Activated CD4-positive, alpha-beta memory T cell treated with anti-CD3 and anti-CD28 coated beads for 36 hours (primary cell): ENCODE measurements at regions of chr17 and their contacts with region 1.

Region 1: DNA sequence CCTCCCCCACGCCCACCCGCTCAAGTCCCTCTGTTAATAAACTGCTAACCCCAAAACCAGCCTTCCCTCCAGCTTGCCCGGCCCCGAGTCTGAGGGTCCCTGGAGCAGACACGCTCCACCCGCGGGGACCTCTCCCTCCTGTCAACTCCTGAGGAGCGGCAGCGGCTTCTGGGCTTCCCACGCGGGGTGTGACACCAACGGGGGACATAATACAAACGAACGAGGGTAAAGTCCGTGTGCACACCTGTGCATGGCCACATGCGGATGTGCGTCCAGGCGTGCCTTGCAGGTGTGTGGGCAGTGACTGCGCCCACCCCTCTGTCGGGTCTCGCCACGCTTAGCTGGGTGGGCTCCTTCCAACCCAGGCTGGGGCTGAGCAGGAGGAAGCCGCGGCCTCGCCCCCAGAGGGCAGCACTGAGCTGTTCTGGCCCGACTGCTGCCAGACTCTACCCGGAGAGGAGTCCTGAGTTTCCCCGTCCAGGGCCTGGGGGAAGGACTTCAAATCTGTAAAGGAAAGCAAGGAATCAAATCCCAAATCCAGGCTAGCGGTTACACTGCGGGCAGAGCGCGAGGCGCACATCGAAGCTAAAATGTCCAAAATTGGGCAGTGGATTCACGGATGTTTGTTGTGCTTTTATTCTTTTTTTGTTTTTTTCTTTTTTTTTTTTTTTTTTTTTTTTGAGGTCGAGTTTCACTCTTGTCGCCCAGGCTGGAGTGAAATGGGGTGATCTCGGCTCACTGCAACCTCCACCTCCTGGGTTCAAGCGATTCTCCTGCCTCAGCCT is 24.2 kb upstream of the KRT17 start:
- DNase-seq: peak; percentile 87
- H3K4me3 Mint-ChIP-seq: peak overlapping the region; percentile 42
- H3K27ac Mint-ChIP-seq: no peak overlapping the region
- H3K4me1 Mint-ChIP-seq: peaks cover 11% of the 10 kb centered on the region
- H3K27me3 Mint-ChIP-seq: no peaks in the 10 kb centered on the region

Region 2: DNA sequence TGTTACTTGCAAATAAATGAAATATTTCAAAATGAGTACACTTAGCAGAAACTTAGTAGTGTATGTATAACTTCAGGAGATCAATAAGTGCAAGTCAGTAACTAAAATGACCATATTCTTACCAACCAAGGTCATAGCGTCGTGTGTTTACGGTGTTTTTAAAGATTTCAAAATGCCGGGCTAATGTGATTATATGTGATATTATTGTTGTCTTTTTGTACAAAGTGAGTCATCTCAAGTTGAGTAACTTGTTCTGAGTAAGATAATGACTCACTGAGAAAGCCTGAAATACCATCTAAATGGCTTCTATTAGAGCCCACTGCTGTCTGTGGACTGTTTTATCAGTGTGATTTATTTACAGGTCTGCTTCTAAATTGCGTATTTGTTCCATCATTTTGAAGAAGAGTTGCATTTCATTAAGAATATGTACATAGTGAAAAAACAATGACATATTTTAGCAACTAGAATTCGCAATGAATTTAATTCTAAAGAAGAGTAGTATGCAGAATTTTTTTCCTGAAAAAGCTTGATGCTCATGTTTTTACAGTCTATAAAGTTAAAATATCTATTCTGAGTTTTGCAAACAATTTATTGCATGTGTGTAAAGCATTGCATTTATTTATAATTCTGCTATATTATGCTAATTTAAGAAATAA is 794.3 kb before region 1 on chr17:
- CTCF ChIA-PET with region 1: interaction called, 41 read pairs
- POLR2A ChIA-PET with region 1: no interaction called
- intact Hi-C with region 1: loop called (anchors 5 kb)
- DNase-seq: no peak
- H3K4me3 Mint-ChIP-seq: no peak overlapping the region
- H3K27ac Mint-ChIP-seq: no peak overlapping the region
- H3K4me1 Mint-ChIP-seq: peaks cover 2% of the 10 kb centered on the region
- H3K27me3 Mint-ChIP-seq: peaks cover 6% of the 10 kb centered on the region

Region 3: DNA sequence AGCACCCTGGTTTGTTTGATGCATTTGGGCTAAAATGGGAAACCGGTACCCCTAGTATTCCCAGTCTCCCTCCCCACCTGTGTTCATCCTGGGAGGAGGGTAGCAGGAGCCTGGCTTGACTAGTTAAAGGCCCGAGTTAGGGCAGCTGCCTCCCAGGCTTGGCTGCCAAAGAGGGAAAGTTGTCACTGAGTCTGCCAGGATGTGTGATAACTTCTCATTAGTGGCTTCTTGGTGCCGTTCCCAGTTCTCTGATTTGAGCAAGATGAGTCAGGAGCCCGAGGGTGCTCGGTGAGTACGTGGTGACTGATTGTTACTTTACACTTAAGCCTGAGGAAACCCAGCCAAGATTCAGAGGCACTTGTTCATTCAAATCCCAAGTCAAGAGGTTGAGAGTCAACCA is 183.9 kb before region 1 on chr17:
- CTCF ChIA-PET with region 1: no interaction called
- POLR2A ChIA-PET with region 1: no interaction called
- intact Hi-C with region 1: no loop called
- DNase-seq: no peak
- H3K4me3 Mint-ChIP-seq: no peak overlapping the region
- H3K27ac Mint-ChIP-seq: no peak overlapping the region
- H3K4me1 Mint-ChIP-seq: no peaks in the 10 kb centered on the region
- H3K27me3 Mint-ChIP-seq: no peaks in the 10 kb centered on the region

Region 4: DNA sequence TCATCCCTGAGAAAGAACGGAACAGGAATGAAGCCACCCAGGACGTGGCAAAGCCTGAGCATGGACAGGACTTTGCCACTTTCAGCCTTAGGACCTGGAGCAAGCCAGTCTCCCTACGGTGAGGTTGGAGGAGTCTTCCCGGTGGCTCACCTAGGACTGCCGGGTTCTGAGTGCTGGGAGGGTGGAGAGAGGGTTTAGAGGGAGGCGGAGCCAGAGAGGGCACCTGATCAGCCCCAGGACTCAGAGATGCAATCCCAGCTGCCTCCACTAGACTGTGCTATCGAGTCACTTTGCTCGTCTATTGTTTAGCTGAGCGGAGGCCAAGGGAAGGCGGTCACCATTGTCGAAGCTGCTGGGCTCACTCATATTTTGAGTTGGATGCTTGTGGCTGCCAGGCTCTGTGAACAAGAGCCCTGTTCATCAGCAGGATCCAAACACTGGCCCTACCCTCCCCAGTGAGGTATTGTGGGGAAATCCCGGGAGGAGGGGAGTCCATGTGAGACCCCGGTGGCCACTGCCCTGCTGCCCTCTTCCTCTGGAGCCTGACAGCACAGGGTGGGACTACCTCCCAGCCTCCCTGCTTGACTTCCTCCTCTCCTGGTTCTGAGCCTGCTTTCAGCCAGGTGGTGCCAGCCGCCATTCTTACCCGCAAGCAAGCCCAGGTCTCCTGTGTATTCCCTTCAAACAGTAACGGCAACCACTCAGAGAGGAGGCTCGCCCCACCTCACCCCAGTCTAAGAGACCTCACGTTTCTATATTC is 68.9 kb before region 1 on chr17:
- CTCF ChIA-PET with region 1: interaction called, 13 read pairs
- POLR2A ChIA-PET with region 1: no interaction called
- intact Hi-C with region 1: no loop called
- DNase-seq: peak; percentile 89
- H3K4me3 Mint-ChIP-seq: no peak overlapping the region
- H3K27ac Mint-ChIP-seq: no peak overlapping the region
- H3K4me1 Mint-ChIP-seq: no peaks in the 10 kb centered on the region
- H3K27me3 Mint-ChIP-seq: peaks cover 28% of the 10 kb centered on the region

Region 5: GRCh38 chr17:41658846-41659245 is 10.2 kb after region 1 on chr17:
- CTCF ChIA-PET with region 1: interaction called, 450 read pairs
- POLR2A ChIA-PET with region 1: interaction called, 3 read pairs
- intact Hi-C with region 1: loop called (anchors 1 kb)
- DNase-seq: no peak
- H3K4me3 Mint-ChIP-seq: no peak overlapping the region
- H3K27ac Mint-ChIP-seq: no peak overlapping the region
- H3K4me1 Mint-ChIP-seq: no peaks in the 10 kb centered on the region
- H3K27me3 Mint-ChIP-seq: peaks cover 1% of the 10 kb centered on the region

Region 6: DNA sequence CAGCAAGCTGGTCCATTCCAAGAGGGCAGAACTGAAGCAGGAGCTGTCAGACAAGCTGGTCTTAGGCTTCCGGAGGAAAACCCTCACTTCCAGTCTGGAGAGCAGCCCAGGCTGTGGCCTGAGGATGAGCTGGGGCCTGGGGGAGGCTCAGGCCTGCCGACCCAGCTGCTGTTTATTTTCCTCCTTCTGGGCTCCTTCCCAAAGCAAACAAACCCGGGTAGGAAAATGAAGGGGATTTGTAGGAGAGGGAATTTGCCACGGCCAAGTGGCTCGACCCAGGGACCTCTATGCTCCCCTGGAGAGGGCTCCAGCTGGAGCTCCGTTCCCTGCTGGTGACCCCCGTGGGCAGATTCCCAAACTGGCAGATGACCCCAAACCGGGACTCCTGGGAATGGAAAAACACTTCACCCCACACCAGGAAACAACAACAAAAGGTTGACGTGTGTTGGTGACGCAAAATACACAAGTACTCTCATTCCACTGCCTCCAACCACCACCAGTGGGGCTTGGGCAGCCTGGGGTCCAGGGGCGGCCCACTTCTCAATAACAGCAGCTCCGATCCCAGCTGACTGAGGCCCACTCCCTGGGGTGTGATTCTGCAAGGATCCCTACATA is 129.1 kb after region 1 on chr17:
- CTCF ChIA-PET with region 1: no interaction called
- POLR2A ChIA-PET with region 1: no interaction called
- intact Hi-C with region 1: no loop called
- DNase-seq: no peak
- H3K4me3 Mint-ChIP-seq: no peak overlapping the region
- H3K27ac Mint-ChIP-seq: no peak overlapping the region
- H3K4me1 Mint-ChIP-seq: no peaks in the 10 kb centered on the region
- H3K27me3 Mint-ChIP-seq: peaks cover 12% of the 10 kb centered on the region